Head of caudate nucleus (tissue), 42 donors: ENCODE measurements at regions of chr10 and their contacts with region 1.

Region 1: DNA sequence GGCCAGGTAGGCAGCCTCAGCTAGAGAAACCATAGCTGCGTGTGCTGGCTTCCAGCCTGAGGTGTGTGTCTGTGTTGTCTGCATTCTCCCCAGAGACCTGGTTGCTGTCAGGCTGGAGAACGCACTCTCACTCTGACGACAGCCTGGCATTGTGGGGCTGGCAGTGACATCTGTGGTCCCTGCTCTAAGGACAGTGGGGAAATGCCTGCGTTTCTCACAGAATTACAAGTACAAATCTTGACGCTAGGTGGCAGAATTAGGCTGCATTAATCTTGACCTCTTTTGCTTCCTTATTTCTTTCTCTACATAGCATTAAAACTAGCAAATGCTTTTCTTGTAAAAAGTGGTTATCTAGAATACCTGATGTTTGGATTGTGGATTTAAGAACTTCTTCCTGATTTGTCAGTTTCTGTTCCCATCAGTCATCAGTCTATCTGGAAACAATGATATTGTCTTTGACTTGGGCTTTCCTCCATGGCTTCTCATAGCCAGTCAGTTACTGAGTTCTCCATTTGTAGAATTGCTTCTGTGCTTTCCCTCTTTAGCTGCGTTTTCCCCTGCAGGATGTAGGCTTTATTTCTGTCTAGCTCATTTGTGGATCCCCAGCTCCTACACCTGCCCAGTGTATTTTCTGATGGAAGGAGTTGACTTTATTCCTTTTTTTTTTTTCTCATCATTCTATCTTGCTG is 86.0 kb downstream of the FANK1 start:
- DNase-seq: peak in 31 of 42 donors; percentile 7 to 82 (median 42)

Region 2: GRCh38 chr10:126186493-126187165 is 204.2 kb after region 1 on chr10:
- intact Hi-C with region 1: no loop called
- DNase-seq: no peak

Region 3: GRCh38 chr10:126302826-126303665 is 320.6 kb after region 1 on chr10:
- intact Hi-C with region 1: loop called (anchors 10 kb)
- DNase-seq: peak in 16 of 42 donors; percentile 11 to 64 (median 22)

Region 4: DNA sequence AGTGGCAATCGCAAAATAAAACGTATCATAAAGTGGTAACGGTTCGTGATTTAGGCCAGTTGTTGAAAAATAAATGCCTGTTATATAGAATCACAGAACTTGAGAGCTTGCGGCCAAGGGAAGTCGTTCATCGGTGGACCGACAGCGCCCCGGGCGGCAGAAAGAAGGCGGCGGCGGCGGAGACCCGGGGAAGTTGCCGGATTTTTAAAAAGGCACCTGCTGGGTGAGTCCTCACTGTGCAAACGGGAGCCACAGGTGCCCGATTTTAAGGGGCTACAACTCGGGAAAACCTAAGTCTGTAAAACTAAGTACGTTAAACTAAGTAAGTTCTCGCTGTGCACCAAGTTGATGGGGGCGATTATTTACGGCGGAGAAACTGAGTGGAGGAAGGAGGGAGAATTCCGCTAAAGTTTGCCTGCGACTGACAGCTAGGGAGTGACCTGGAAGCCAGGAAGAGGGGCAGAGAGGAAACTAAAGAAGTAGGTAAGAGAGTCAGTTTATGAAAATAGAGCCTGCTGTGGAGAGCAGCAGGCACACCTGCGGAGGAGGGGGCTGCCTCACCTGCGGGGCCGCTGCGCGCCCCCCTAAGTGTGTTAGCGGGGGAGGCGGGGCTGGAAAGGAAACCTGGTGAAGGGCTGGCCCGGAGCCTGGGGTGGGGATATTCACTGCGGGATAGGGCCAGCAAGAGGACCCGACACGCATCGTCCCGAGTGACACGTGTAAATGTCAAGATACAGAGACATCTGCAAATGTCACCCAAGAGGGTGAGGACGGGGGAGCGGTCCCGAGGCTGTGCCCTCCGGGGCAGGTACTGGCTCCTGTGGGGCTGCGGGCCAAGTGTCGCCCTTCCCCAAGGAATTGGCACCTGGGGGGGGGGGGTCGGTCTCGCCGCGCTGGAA is 404.9 kb after region 1 on chr10:
- intact Hi-C with region 1: loop called (anchors 5 kb)
- DNase-seq: peak; percentile 65 to 93 (median 84)